IMR-90 (cell line): ENCODE measurements at regions of chr17 and their contacts with region 1.

Region 1: GRCh38 chr17:78019367-78019975 is 61.0 kb downstream of the TNRC6C start:
- DNase-seq: peak; percentile 62
- ATAC-seq: peak; percentile 66
- H3K4me3 ChIP-seq: no peak overlapping the region
- H3K27ac ChIP-seq: no peak overlapping the region
- H3K4me1 ChIP-seq: no peaks in the 10 kb centered on the region; the same call in 1 of the 2 replicates
- H3K27me3 ChIP-seq: no peaks in the 10 kb centered on the region
- CTCF ChIP-seq: peak; percentile 71
- POLR2A ChIP-seq: no peak
- RAD21 ChIP-seq: peak; percentile 64

Region 2: GRCh38 chr17:77542551-77543490 is 476.6 kb before region 1 on chr17:
- CTCF ChIA-PET with region 1: interaction called, 31 read pairs
- POLR2A ChIA-PET with region 1: no interaction called
- dilution Hi-C with region 1: no loop called
- in situ Hi-C with region 1: loop called (anchors 5 kb)
- intact Hi-C with region 1: loop called (anchors 1 kb)
- DNase-seq: peak; percentile 78
- ATAC-seq: peak; percentile 99
- H3K4me3 ChIP-seq: no peak overlapping the region
- H3K27ac ChIP-seq: no peak overlapping the region
- H3K4me1 ChIP-seq: no peaks in the 10 kb centered on the region
- H3K27me3 ChIP-seq: peaks cover 44% of the 10 kb centered on the region
- CTCF ChIP-seq: peak; percentile 96
- POLR2A ChIP-seq: no peak
- RAD21 ChIP-seq: peak; percentile 93

Region 3: DNA sequence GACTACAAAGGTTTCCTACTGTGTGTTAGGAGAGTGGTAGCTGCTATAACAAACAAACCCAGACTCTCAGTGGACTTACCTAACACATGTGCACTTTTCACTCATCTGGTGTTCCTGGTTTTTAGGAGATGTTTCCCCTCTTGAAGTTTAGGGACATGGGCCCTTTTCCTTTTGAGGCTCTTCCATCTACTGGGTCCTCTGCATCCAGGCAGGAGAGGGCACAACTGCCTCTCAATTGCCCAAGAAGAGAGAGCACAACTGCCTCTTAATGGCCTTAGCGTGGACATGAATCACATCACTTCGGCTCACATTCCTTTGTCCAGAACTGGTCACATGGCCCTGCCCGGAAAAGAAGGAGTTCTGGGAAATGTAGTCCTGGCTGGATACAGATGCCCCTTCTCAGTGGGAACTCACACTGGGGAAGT is 70.8 kb before region 1 on chr17:
- CTCF ChIA-PET with region 1: no interaction called
- POLR2A ChIA-PET with region 1: no interaction called
- dilution Hi-C with region 1: no loop called
- in situ Hi-C with region 1: no loop called
- intact Hi-C with region 1: no loop called
- DNase-seq: peak; percentile 59
- ATAC-seq: peak; percentile 96
- H3K4me3 ChIP-seq: no peak overlapping the region
- H3K27ac ChIP-seq: no peak overlapping the region
- H3K4me1 ChIP-seq: no peaks in the 10 kb centered on the region
- H3K27me3 ChIP-seq: peaks cover 32% of the 10 kb centered on the region
- CTCF ChIP-seq: no peak
- POLR2A ChIP-seq: no peak
- RAD21 ChIP-seq: no peak

Region 4: GRCh38 chr17:78082988-78083387 is 63.5 kb after region 1 on chr17:
- CTCF ChIA-PET with region 1: interaction called, 12 read pairs
- POLR2A ChIA-PET with region 1: no interaction called
- dilution Hi-C with region 1: no loop called
- in situ Hi-C with region 1: no loop called
- intact Hi-C with region 1: no loop called
- DNase-seq: no peak
- ATAC-seq: no peak
- H3K4me3 ChIP-seq: no peak overlapping the region
- H3K27ac ChIP-seq: no peak overlapping the region
- H3K4me1 ChIP-seq: no peaks in the 10 kb centered on the region
- H3K27me3 ChIP-seq: no peaks in the 10 kb centered on the region
- CTCF ChIP-seq: no peak
- POLR2A ChIP-seq: no peak
- RAD21 ChIP-seq: no peak

Region 5: GRCh38 chr17:78127239-78128085 is 108.0 kb after region 1 on chr17:
- CTCF ChIA-PET with region 1: no interaction called
- POLR2A ChIA-PET with region 1: no interaction called
- dilution Hi-C with region 1: no loop called
- in situ Hi-C with region 1: no loop called
- intact Hi-C with region 1: no loop called
- DNase-seq: no peak
- ATAC-seq: no peak; the same call in 1 of the 2 replicates
- H3K4me3 ChIP-seq: no peak overlapping the region
- H3K27ac ChIP-seq: no peak overlapping the region
- H3K4me1 ChIP-seq: peaks cover 2% of the 10 kb centered on the region; the same call in 1 of the 2 replicates
- H3K27me3 ChIP-seq: peaks cover 57% of the 10 kb centered on the region
- CTCF ChIP-seq: no peak
- POLR2A ChIP-seq: no peak
- RAD21 ChIP-seq: no peak